Activated naive CD4-positive, alpha-beta T cell treated with anti-CD3 and anti-CD28 coated beads for 36 hours (primary cell): ENCODE measurements at regions of chr4 and their contacts with region 1.

Region 1: GRCh38 chr4:74444891-74445642 is at the start of gene AREG:
- DNase-seq: peak; percentile 91
- H3K4me3 Mint-ChIP-seq: peak within 1 kb of the TSS; percentile 87
- H3K27ac Mint-ChIP-seq: peak within 1 kb of the TSS; percentile 75
- H3K4me1 Mint-ChIP-seq: peaks cover 4% of the 10 kb centered on the region
- H3K27me3 Mint-ChIP-seq: no peaks in the 10 kb centered on the region
- total RNA-seq, gene AREG: 1.5 to 2.1 TPM

Region 2: DNA sequence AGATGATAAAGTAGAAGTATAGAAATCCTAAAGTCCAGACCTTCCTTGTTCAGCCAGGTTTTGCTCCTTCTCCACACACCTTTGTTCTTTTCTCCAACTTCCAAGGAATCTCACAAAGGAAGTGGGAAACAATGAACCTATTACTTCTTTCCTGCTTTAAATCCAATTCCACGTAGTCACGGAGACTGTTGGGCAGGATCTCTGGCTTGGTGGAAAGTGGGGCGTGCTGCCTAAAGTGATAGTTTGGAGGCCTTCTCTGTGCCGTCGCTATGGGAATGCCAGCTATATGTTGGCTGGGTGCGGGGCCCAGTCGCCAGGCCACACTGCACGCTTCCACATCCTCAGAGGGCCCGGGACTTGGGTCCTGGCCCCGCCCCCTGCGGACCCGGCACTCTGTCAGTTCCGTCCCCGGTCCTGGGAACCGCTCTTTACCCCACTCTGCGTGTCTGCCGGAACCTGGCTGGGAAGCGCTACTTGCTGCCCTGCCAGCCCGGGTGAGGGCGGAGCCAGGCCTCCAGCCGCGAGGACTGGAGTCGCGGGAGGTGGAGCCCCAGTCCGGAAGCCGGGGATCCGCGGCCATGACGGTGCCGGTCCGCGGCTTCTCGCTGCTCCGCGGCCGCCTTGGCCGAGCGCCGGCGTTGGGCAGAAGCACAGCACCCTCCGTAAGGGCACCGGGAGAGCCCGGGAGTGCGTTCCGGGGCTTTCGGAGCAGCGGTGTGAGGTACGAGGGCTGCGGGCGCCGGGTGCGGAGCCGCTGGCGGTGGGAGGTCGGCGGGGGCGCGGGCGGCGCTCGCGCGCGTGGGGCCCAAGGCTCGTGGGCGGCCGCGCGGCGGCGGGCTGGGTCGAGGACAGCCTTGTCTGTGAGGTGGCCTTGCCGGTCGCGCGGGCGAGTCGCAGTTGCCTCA is 287.3 kb before region 1 on chr4 and contains the start of gene MTHFD2L:
- CTCF ChIA-PET with region 1: no interaction called
- intact Hi-C with region 1: loop called (anchors 5 kb)
- DNase-seq: peak; percentile 83
- H3K4me3 Mint-ChIP-seq: peak within 1 kb of the TSS; percentile 87
- H3K27ac Mint-ChIP-seq: peak within 1 kb of the TSS; percentile 83
- H3K4me1 Mint-ChIP-seq: peaks cover 23% of the 10 kb centered on the region
- H3K27me3 Mint-ChIP-seq: peaks cover 4% of the 10 kb centered on the region
- total RNA-seq, gene MTHFD2L: 4.8 to 5.3 TPM

Region 3: GRCh38 chr4:74370912-74371311 is 74.2 kb before region 1 on chr4:
- CTCF ChIA-PET with region 1: no interaction called
- intact Hi-C with region 1: loop called (anchors 2 kb)
- DNase-seq: peak; percentile 53
- H3K4me3 Mint-ChIP-seq: no peak overlapping the region
- H3K27ac Mint-ChIP-seq: no peak overlapping the region
- H3K4me1 Mint-ChIP-seq: no peaks in the 10 kb centered on the region
- H3K27me3 Mint-ChIP-seq: peaks cover 25% of the 10 kb centered on the region

Region 4: GRCh38 chr4:74397748-74398426 is 47.2 kb before region 1 on chr4:
- CTCF ChIA-PET with region 1: no interaction called
- intact Hi-C with region 1: loop called (anchors 1 kb)
- DNase-seq: no peak
- H3K4me3 Mint-ChIP-seq: peak overlapping the region; percentile 85
- H3K27ac Mint-ChIP-seq: peak overlapping the region; percentile 86
- H3K4me1 Mint-ChIP-seq: peaks cover 5% of the 10 kb centered on the region
- H3K27me3 Mint-ChIP-seq: no peaks in the 10 kb centered on the region

Region 5: DNA sequence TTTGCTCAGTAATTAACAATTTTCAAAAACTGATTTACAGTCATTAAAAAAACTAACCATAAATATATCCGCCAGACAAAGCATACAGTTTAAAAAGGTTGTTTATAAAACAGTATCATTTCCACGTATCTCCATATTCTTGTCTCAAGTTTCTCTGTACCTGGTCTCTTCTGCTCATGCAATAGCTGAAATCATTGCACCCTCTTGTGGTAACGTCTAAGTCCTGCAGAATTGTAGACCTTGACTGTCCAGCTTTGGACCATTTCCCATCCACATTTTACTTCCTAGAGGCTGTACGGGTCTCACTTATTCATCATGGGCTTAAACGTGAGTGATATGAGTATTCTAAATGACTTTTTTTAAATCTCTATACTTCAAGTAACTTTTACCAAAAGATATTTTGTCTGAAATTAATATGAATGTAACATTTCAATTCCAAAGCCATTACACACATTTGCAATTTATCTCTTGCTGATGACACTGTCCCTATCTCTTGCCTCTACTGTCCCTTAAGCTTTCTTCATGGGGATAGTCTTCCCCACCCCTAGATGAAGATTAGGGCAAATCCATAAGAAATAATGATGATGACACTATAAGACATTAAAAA is 230.7 kb after region 1 on chr4:
- CTCF ChIA-PET with region 1: interaction called, 5 read pairs
- intact Hi-C with region 1: loop called (anchors 2 kb)
- DNase-seq: peak; percentile 19
- H3K4me3 Mint-ChIP-seq: no peak overlapping the region
- H3K27ac Mint-ChIP-seq: no peak overlapping the region
- H3K4me1 Mint-ChIP-seq: peaks cover 4% of the 10 kb centered on the region
- H3K27me3 Mint-ChIP-seq: peaks cover 5% of the 10 kb centered on the region